Testis (tissue), 5 donors: ENCODE measurements at regions of chr4 and their contacts with region 1.

Region 1: DNA sequence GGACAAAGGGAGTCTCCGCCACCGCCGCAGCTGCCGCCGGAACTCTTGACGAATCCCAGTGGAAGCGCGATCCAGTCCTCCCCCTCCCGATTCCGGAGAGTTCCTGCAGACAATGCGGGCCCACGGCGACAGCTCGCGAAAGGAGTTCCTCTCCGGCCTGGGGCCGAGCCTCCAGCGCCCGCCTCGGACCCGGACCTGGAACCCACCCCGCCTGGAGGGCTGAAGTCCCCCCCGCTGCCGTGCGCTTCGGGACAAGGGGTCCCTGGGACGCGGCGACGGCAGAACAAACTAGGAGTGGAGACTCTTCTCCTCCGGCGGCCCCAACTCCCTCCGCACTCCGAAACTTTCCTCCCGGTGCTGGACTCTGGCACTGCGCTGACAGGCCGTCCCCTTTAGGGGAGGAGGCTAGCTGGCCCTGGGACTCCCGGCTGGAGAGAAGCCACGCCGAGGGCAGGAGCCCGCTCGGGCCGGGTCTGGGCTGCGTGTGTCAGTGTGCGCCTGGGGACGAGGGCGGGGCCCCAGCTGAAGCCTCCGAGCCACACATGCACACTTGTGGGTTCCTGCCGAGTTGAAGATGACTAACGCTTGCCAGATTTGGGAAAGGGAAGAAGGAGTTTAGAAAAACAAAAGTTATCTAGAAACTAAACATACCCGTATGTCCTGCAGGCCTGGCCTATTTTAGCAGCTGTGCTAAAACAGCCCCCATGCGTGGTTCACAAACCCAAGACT is at the start of gene ANTXR2:
- DNase-seq: peak; percentile 89
- H3K4me3 ChIP-seq: peak within 1 kb of the TSS; percentile 86 to 94
- H3K27ac ChIP-seq: peak within 1 kb of the TSS; percentile 82 to 89
- H3K4me1 ChIP-seq: no peaks in the 10 kb centered on the region
- H3K27me3 ChIP-seq: no peaks in the 10 kb centered on the region
- CTCF ChIP-seq: no peak
- POLR2A ChIP-seq: no peak
- total RNA-seq, gene ANTXR2: 23.8 to 30.4 TPM

Region 2: GRCh38 chr4:78962597-78963115 is 1110.3 kb before region 1 on chr4:
- intact Hi-C with region 1: loop called (anchors 5 kb)
- DNase-seq: peak; percentile 42
- H3K4me3 ChIP-seq: no peak overlapping the region
- H3K27ac ChIP-seq: peak overlapping the region; percentile 71 to 89
- H3K4me1 ChIP-seq: peaks cover 24% of the 10 kb centered on the region
- H3K27me3 ChIP-seq: no peaks in the 10 kb centered on the region
- CTCF ChIP-seq: no peak
- POLR2A ChIP-seq: no peak

Region 3: DNA sequence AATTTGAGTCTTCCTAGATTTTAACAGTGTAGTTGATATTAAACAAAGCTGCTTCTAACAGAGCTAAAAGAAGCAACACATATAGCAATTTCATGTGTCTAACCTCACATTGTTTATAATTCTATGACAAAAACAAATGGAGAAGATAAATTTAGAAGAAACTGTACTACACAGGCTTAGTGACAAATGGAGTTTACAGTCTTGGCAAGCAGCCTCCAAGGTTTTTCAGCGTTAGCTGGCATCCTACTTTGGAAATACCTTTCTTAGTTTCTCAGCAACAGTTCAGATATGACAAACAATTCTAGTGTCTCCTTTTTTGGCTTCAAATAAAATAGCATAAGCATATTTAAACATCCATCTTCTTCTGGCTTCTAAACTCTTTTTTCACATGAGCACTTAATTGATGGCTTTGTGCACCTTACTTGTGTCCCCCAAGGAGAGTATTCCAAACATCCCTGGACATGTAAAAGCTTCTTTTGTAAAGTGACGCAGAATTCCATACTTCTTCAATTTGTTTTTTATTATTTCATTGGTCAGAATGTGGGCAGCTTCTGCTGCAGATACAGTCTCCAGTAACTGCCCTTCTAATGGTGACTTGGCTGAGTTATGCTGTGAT is 249.7 kb before region 1 on chr4:
- intact Hi-C with region 1: no loop called
- DNase-seq: no peak
- H3K4me3 ChIP-seq: no peak overlapping the region
- H3K27ac ChIP-seq: no peak overlapping the region
- H3K4me1 ChIP-seq: no peaks in the 10 kb centered on the region
- H3K27me3 ChIP-seq: no peaks in the 10 kb centered on the region
- CTCF ChIP-seq: no peak
- POLR2A ChIP-seq: no peak

Region 4: GRCh38 chr4:80184053-80184790 is 111.3 kb after region 1 on chr4:
- intact Hi-C with region 1: loop called (anchors 10 kb)
- DNase-seq: peak; percentile 90
- H3K4me3 ChIP-seq: peak overlapping the region; percentile 69 to 72
- H3K27ac ChIP-seq: peak overlapping the region; percentile 78 to 82
- H3K4me1 ChIP-seq: peaks cover 15% of the 10 kb centered on the region
- H3K27me3 ChIP-seq: peaks cover 5% of the 10 kb centered on the region
- CTCF ChIP-seq: peak; percentile 72 to 86 (median 77)
- POLR2A ChIP-seq: no peak